CD4-positive, alpha-beta memory T cell (primary cell): ENCODE measurements at regions of chr9 and their contacts with region 1.

Region 1: DNA sequence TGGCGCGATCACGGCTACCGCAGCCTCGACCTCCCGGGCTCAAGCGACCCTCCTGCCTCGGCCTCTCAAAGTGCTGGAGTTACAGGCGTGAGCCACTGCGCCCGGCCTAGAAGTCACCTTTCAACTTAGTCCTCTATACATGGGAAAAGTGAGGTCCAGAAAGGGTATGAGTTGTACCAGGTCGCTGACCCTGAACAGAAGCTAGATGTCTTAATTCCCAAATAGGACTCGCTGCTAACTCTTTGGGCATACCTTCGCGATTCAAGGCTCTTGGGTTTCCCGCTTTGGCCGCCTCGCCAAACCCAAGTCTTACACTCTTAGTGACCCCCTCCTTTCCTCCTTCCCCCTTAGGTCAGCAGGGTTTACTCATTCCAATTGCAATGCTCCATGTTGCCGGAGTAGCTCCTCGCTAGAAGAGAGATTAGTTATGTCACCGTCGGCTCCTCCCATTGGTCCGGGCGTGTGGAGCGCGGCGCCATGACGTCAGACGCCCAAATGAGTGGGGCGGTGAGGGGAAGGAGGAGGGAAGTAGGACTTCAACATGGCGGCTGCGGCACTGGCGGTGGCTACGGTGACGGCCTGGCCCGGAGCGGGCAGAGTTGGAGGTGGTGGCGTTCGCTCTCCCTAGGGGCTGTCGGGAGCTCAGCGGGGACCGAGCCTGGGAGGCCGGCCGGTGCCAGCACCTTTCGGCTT is at the start of gene UBAP1:
- DNase-seq: peak; percentile 93 to 98 (median 94)
- H3K4me3 ChIP-seq: peak within 1 kb of the TSS; percentile 57 to 74
- H3K4me3 Mint-ChIP-seq: peak within 1 kb of the TSS; percentile 91 to 100 (median 99)
- H3K27ac ChIP-seq: peak within 1 kb of the TSS; percentile 94
- H3K27ac Mint-ChIP-seq: peak within 1 kb of the TSS; percentile 85 to 100 (median 100)
- H3K4me1 ChIP-seq: peaks cover 18% of the 10 kb centered on the region
- H3K4me1 Mint-ChIP-seq: peaks cover 13 to 27% (median 15%) of the 10 kb centered on the region in 4 donors
- H3K27me3 ChIP-seq: no peaks in the 10 kb centered on the region
- H3K27me3 Mint-ChIP-seq: no peaks in the 10 kb centered on the region
- total RNA-seq, gene UBAP1: 34.8 to 36.3 TPM

Region 2: GRCh38 chr9:34126207-34127034 is 52.2 kb before region 1 on chr9 and contains the start of gene DCAF12:
- CTCF ChIA-PET with region 1: interaction called, 3 read pairs
- POLR2A ChIA-PET with region 1: interaction called, 11 read pairs
- intact Hi-C with region 1: loop called (anchors 1 kb)
- DNase-seq: peak; percentile 90 to 92 (median 91)
- H3K4me3 ChIP-seq: peak within 1 kb of the TSS; percentile 88 to 92
- H3K4me3 Mint-ChIP-seq: peak within 1 kb of the TSS; percentile 96 to 100 (median 98)
- H3K27ac ChIP-seq: peak within 1 kb of the TSS; percentile 83
- H3K27ac Mint-ChIP-seq: peak within 1 kb of the TSS; percentile 95 to 99 (median 99)
- H3K4me1 ChIP-seq: peaks cover 45% of the 10 kb centered on the region
- H3K4me1 Mint-ChIP-seq: peaks cover 39 to 58% (median 45%) of the 10 kb centered on the region in 4 donors
- H3K27me3 ChIP-seq: no peaks in the 10 kb centered on the region
- H3K27me3 Mint-ChIP-seq: no peaks in the 10 kb centered on the region
- total RNA-seq, gene DCAF12: 29.7 to 31.0 TPM

Region 3: GRCh38 chr9:34190996-34191892 is 12.6 kb after region 1 on chr9:
- CTCF ChIA-PET with region 1: interaction called, 3 read pairs
- POLR2A ChIA-PET with region 1: interaction called, 22 read pairs
- intact Hi-C with region 1: no loop called
- DNase-seq: no peak
- H3K4me3 ChIP-seq: no peak overlapping the region
- H3K4me3 Mint-ChIP-seq: peak overlapping the region in 3 of 8 donors; percentile 25 to 35 (median 27)
- H3K27ac ChIP-seq: no peak overlapping the region
- H3K27ac Mint-ChIP-seq: peak overlapping the region; percentile 46 to 87 (median 66)
- H3K4me1 ChIP-seq: peaks cover 56% of the 10 kb centered on the region
- H3K4me1 Mint-ChIP-seq: peaks cover 41 to 74% (median 61%) of the 10 kb centered on the region in 4 donors
- H3K27me3 ChIP-seq: no peaks in the 10 kb centered on the region
- H3K27me3 Mint-ChIP-seq: no peaks in the 10 kb centered on the region

Region 4: GRCh38 chr9:34783951-34784487 is 605.4 kb after region 1 on chr9:
- CTCF ChIA-PET with region 1: no interaction called
- POLR2A ChIA-PET with region 1: no interaction called
- intact Hi-C with region 1: no loop called
- DNase-seq: no peak
- H3K4me3 ChIP-seq: no peak overlapping the region
- H3K4me3 Mint-ChIP-seq: no peak overlapping the region
- H3K27ac ChIP-seq: no peak overlapping the region
- H3K27ac Mint-ChIP-seq: no peak overlapping the region
- H3K4me1 ChIP-seq: no peaks in the 10 kb centered on the region
- H3K4me1 Mint-ChIP-seq: no peaks in the 10 kb centered on the region
- H3K27me3 ChIP-seq: no peaks in the 10 kb centered on the region
- H3K27me3 Mint-ChIP-seq: peaks cover 17 to 26% of the 10 kb centered on the region in 2 donors